ENCODE measurements at regions of chr3 and their contacts with region 1.

Region 1: GRCh38 chr3:46488735-46489361 is 8.9 kb upstream of the RTP3 start:
- DNase-seq: peak; percentile 97
- H3K4me3 Mint-ChIP-seq: peak overlapping the region; percentile 24
- H3K27ac Mint-ChIP-seq: no peak overlapping the region
- H3K4me1 Mint-ChIP-seq: peaks cover 37% of the 10 kb centered on the region
- H3K27me3 Mint-ChIP-seq: peaks cover 9% of the 10 kb centered on the region

Region 2: DNA sequence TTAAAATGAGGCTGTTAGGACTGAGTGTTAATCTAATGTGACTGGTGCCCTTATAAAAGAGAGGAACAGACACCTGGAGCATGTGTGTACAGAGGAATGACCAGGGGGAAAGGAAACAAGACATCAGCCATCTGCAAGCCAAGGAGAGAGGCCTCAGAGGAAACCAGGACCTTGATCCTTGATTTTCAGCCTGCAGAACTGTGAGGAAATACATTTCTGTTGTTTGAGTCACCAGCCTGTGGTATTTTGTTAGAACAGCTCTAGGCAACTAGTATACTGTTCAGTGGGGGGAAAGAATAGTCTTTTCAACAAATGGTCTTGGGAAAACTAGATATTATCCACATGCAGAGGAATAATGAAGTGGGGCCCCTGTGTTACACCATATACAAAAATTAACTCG is 361.3 kb before region 1 on chr3:
- CTCF ChIA-PET with region 1: no interaction called
- DNase-seq: no peak
- H3K4me3 Mint-ChIP-seq: no peak overlapping the region
- H3K27ac Mint-ChIP-seq: no peak overlapping the region
- H3K4me1 Mint-ChIP-seq: peaks cover 27% of the 10 kb centered on the region
- H3K27me3 Mint-ChIP-seq: peaks cover 39% of the 10 kb centered on the region

Region 3: DNA sequence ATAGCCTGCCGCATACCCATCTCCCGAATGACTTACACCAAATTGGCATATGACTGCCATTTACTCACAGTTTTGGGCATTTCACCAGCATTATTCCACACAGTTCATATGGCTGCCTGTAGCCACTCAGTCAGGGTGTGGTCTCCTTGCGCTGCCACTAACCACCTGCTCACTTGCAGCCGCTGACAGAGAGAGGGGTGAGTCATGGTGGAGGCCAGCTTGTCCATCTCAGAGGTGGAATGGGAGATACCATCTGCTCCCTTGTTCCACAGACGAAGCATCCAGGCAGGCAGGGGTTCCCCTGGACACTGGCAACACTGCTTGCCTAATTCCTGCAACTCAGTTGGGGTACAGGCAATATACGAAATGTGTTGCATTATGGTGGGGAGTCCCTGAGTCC is 66.2 kb before region 1 on chr3:
- CTCF ChIA-PET with region 1: no interaction called
- DNase-seq: no peak
- H3K4me3 Mint-ChIP-seq: no peak overlapping the region
- H3K27ac Mint-ChIP-seq: no peak overlapping the region
- H3K4me1 Mint-ChIP-seq: peaks cover 17% of the 10 kb centered on the region
- H3K27me3 Mint-ChIP-seq: peaks cover 11% of the 10 kb centered on the region

Region 4: DNA sequence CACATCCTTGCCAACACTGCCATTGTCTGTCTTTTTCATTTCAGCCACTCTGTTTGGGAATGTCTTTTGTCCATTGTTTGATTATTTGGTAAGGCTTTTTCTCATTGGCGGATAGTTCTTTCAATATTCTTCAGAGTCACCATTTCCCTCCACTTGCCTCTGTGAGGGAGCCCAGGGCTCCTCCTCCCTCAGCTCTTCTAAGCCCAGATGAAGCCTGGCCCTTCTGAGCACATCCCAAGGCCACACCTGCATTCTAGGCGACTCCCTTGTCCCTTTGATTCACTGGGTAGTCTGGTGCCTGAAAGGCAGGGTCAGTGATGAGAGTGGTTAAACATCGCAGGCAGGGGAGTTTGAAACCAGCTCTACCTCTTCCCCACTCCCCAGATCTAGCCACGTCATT is 11.7 kb before region 1 on chr3:
- CTCF ChIA-PET with region 1: interaction called, 21 read pairs
- DNase-seq: no peak
- H3K4me3 Mint-ChIP-seq: no peak overlapping the region
- H3K27ac Mint-ChIP-seq: no peak overlapping the region
- H3K4me1 Mint-ChIP-seq: no peaks in the 10 kb centered on the region
- H3K27me3 Mint-ChIP-seq: peaks cover 77% of the 10 kb centered on the region

Region 5: GRCh38 chr3:46549408-46549904 is 60.6 kb after region 1 on chr3:
- CTCF ChIA-PET with region 1: interaction called, 13 read pairs
- DNase-seq: no peak
- H3K4me3 Mint-ChIP-seq: no peak overlapping the region
- H3K27ac Mint-ChIP-seq: peak overlapping the region; percentile 65
- H3K4me1 Mint-ChIP-seq: peaks cover 70% of the 10 kb centered on the region
- H3K27me3 Mint-ChIP-seq: peaks cover 19% of the 10 kb centered on the region

Region 6: DNA sequence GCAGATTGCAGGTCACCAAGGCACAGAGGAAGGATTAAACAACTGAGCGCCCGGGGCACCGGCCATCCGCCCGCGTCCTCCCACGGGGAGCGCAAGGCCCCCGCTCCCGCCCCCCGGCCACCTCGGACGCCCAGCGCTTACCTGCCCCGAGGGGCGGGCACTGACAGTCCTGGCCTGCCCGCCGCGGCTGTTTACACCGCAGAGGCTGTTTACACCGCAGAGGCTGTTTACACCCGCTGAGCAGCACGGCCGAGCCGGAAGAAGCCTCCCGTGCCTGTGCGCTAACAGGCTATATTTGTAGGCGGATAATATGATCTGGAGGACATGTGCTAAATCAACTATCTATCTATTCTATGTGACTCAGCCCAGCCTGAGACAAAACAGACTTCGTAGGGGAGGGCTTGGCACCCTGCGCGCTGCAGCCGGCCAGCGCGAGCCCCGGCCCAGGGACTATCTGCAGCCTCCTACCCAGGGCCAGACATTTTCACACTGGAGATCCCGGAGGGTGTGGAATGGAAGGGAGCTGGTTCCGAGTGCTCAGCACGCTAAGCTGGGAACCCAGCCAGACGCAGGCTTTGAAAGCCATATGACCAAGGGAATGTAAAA is 77.3 kb after region 1 on chr3 and contains the start of gene LRRC2:
- CTCF ChIA-PET with region 1: interaction called, 133 read pairs
- DNase-seq: peak; percentile 67
- H3K4me3 Mint-ChIP-seq: peak within 1 kb of the TSS; percentile 72
- H3K27ac Mint-ChIP-seq: peak within 1 kb of the TSS; percentile 16
- H3K4me1 Mint-ChIP-seq: peaks cover 21% of the 10 kb centered on the region
- H3K27me3 Mint-ChIP-seq: peaks cover 47% of the 10 kb centered on the region

Region 7: GRCh38 chr3:46695177-46695961 is 206.5 kb after region 1 on chr3:
- CTCF ChIA-PET with region 1: interaction called, 17 read pairs
- DNase-seq: peak; percentile 71
- H3K4me3 Mint-ChIP-seq: peak overlapping the region; percentile 62
- H3K27ac Mint-ChIP-seq: peak overlapping the region; percentile 96
- H3K4me1 Mint-ChIP-seq: peaks cover 75% of the 10 kb centered on the region
- H3K27me3 Mint-ChIP-seq: peaks cover 37% of the 10 kb centered on the region

Measured in activated naive CD4-positive, alpha-beta T cell treated with anti-CD3 and anti-CD28 coated beads, Interleukin-2, amount 10 ng/mL, durations not matched to agents 7 days and 5 days (primary cell).